ENCODE measurements at regions of chr12 and their contacts with region 1.

Region 1: GRCh38 chr12:80068173-80068572 is 31.2 kb upstream of the OTOGL start:
- DNase-seq: no peak
- H3K4me3 ChIP-seq: no peak overlapping the region
- H3K27ac ChIP-seq: no peak overlapping the region
- H3K4me1 ChIP-seq: no peaks in the 10 kb centered on the region
- H3K27me3 ChIP-seq: no peaks in the 10 kb centered on the region
- CTCF ChIP-seq: no peak

Region 2: DNA sequence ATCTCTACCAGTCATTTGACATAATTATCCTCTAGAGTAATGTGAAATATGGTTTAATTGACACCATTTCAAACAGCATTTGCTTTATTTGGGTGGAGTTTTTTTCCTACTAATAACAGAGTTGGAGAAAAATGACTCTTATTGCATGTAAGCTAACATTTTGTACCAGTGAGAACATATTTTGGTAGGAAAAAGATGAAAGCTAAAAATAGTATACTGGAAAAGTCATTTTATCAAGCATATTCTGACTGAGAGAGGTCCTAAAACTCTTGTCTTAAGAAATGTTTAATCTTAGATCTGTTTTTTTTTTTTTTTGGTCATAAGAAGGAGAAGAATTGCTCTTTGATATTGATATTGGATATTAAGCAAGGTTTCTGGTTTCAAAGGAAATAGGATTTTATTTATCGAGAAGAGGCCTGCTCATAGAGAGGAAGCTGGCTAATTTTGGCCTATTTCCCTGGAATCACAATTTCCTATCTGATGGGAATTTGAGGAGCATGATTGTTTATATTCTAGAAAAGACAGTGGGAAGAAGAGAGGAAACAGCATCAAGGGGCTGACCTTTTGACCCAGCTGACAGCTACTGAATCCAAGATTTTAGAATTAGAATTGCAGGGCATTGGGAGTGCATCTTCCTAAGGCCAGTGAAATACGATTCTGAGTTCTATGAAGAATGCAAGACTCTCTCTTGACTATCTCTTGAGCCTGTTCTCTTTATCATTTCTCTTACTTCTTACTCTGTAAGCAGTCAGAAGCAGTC is 50.6 kb after region 1 on chr12:
- intact Hi-C with region 1: loop called (anchors 5 kb)
- DNase-seq: no peak
- H3K4me3 ChIP-seq: no peak overlapping the region
- H3K27ac ChIP-seq: peak overlapping the region; percentile 70 to 79
- H3K4me1 ChIP-seq: peaks cover 7 to 17% of the 10 kb centered on the region in 2 donors
- H3K27me3 ChIP-seq: no peaks in the 10 kb centered on the region
- CTCF ChIP-seq: no peak

Measured in ascending aorta (tissue), 2 donors.